Caco-2 (cell line): ENCODE measurements at regions of chr14 and their contacts with region 1.

Region 1: DNA sequence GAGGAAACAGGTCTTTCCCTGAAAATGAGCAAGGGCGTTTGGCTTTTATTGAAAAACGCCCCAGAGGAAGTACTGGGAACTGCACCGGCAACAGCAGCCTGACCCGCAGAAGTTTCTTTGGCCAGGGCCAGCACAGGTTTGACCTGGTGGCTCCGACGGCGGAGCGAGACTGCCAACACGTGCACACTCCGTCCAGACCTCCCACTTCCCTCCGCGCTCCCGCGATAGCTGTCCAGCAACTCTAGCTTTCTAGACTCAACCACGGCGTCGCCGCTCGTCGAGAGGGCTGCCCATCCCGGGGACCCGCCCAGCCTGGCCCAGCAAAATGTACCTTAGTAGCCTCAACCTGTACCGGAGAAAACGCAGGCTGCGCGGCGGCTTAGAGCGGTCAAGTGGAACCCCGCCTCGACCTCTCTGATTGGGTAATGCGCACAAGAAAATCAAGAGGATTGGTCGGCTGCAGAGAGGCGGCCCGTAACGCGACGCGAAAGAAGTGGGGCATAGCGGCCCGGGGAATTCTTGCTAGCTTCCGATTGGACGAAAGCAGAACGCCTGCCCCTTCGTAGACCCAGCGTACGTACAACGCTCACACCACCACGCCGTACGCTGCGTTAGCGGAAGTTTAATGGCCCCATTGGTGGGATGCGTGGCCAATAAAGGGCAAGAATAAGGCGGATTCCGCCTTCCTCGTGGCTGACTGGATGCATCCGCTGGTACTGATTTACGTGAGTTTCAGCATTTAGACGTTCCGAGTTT is at the start of gene WDR89:
- DNase-seq: peak; percentile 97 to 99
- H3K4me3 ChIP-seq: peak within 1 kb of the TSS; percentile 67
- H3K4me3 Mint-ChIP-seq: peak within 1 kb of the TSS; percentile 88
- H3K27ac Mint-ChIP-seq: peak within 1 kb of the TSS; percentile 96
- H3K4me1 ChIP-seq: no peaks in the 10 kb centered on the region
- H3K4me1 Mint-ChIP-seq: no peaks in the 10 kb centered on the region
- H3K27me3 ChIP-seq: no peaks in the 10 kb centered on the region
- H3K27me3 Mint-ChIP-seq: no peaks in the 10 kb centered on the region
- CTCF ChIP-seq: peak; percentile 77 to 85
- total RNA-seq, gene WDR89: 14.4 and 16.6 TPM in 2 replicates

Region 2: GRCh38 chr14:63677821-63678380 is 36.2 kb after region 1 on chr14:
- CTCF ChIA-PET with region 1: no interaction called
- POLR2A ChIA-PET with region 1: interaction called, 10 read pairs
- intact Hi-C with region 1: no loop called
- DNase-seq: peak in 1 of 2 experiments; percentile 61
- H3K4me3 ChIP-seq: no peak overlapping the region
- H3K4me3 Mint-ChIP-seq: peak overlapping the region; percentile 24
- H3K27ac Mint-ChIP-seq: peak overlapping the region; percentile 78
- H3K4me1 ChIP-seq: peaks cover 14% of the 10 kb centered on the region
- H3K4me1 Mint-ChIP-seq: peaks cover 7% of the 10 kb centered on the region
- H3K27me3 ChIP-seq: no peaks in the 10 kb centered on the region
- H3K27me3 Mint-ChIP-seq: no peaks in the 10 kb centered on the region
- CTCF ChIP-seq: no peak

Region 3: DNA sequence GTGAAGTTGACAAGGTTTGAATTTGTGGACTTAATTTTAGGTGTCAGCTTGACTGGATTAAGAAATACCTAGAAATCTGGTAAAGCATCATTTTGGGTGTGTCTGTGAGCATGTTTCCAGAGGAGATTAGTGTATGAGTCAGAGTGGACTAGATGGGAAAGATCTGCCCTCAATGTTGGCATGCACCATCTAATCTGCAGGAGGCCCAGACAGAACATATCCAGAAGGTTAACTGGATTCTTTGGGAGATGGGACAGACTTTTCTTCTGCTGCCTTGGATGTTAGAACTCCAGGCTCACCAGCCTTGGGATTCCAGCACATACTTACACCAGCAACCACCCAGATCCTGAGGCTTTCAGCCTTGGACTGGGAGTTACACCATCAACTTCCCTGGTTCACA is 72.1 kb after region 1 on chr14:
- CTCF ChIA-PET with region 1: no interaction called
- POLR2A ChIA-PET with region 1: no interaction called
- intact Hi-C with region 1: no loop called
- DNase-seq: no peak
- H3K4me3 ChIP-seq: no peak overlapping the region
- H3K4me3 Mint-ChIP-seq: no peak overlapping the region
- H3K27ac Mint-ChIP-seq: no peak overlapping the region
- H3K4me1 ChIP-seq: no peaks in the 10 kb centered on the region
- H3K4me1 Mint-ChIP-seq: no peaks in the 10 kb centered on the region
- H3K27me3 ChIP-seq: no peaks in the 10 kb centered on the region
- H3K27me3 Mint-ChIP-seq: no peaks in the 10 kb centered on the region
- CTCF ChIP-seq: no peak

Region 4: DNA sequence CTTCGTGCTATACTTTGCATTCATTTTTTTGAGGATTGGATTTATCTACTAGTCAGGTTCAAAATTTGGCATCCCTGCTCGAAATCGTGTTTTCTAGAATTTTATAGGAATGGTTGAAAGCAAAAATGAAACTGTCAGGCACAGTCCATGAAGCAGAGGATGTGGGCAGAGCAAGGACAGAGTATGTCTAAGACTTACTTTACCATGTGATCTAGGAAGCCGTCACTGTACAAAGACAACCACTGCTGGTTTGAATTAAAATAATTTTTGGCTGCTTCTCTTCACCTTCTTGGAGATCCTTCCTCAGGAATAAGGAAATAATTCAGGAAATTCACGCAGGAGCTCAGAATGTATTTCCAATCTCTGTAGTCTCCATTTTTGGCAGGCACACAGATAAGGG is 117.8 kb after region 1 on chr14:
- CTCF ChIA-PET with region 1: interaction called, 3 read pairs
- POLR2A ChIA-PET with region 1: interaction called, 14 read pairs
- intact Hi-C with region 1: loop called (anchors 5 kb)
- DNase-seq: no peak
- H3K4me3 ChIP-seq: no peak overlapping the region
- H3K4me3 Mint-ChIP-seq: no peak overlapping the region
- H3K27ac Mint-ChIP-seq: no peak overlapping the region
- H3K4me1 ChIP-seq: peaks cover 3% of the 10 kb centered on the region
- H3K4me1 Mint-ChIP-seq: peaks cover 7% of the 10 kb centered on the region
- H3K27me3 ChIP-seq: no peaks in the 10 kb centered on the region
- H3K27me3 Mint-ChIP-seq: no peaks in the 10 kb centered on the region
- CTCF ChIP-seq: no peak